Activated B cell treated with CpG ODN at 0.5 μM for 24 hours (primary cell): ENCODE measurements at regions of chr10 and their contacts with region 1.

Region 1: DNA sequence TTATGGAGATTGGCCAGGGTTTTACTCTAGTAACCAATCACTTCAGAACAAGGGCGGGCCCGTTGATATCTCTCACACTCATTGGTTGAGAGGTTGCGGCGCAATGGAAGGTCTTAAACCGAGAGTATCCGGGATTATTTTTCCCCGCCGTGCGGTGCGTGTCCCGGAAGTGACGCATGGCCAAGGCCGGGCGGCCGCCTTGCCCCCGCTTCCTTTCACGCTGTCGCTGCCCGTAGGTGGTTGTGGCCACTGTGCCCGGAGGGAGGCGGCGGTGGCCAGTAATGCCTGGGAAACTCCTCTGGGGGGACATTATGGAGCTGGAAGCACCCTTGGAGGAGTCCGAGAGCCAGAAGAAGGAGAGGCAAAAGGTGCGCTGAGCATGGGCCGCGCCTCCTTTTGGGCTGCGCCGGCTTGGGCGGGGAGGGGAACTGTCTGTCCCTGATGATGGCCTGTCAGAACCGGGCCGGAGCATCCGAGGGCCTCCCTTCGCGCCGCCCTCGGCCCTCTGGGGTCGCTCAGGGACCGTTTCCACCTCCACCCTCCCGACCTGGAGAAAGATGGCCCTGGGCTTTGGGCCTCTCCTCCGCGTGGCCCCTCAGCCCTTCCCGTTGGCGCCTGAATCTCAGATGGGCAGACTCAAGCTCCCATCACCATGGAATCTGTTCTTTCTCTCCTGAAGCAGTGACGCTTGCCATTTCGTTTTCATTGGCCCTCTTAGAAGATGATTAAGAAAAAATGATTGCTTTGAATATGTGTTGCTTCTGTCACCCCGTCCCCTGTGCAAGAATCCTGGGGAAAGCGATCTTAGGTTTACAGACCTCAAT is at the start of gene DDX50:
- DNase-seq: peak; percentile 92
- ATAC-seq: peak; percentile 96
- H3K4me3 Mint-ChIP-seq: peak within 1 kb of the TSS; percentile 98
- H3K27ac Mint-ChIP-seq: peak within 1 kb of the TSS; percentile 98
- H3K4me1 Mint-ChIP-seq: peaks cover 40% of the 10 kb centered on the region
- H3K27me3 Mint-ChIP-seq: no peaks in the 10 kb centered on the region
- CTCF ChIP-seq: no peak
- total RNA-seq, gene DDX50: 36.3 and 41.7 TPM in 2 replicates

Region 2: GRCh38 chr10:67936416-67936815 is 964.9 kb before region 1 on chr10:
- CTCF ChIA-PET with region 1: no interaction called
- POLR2A ChIA-PET with region 1: no interaction called
- intact Hi-C with region 1: no loop called
- DNase-seq: no peak
- ATAC-seq: no peak
- H3K4me3 Mint-ChIP-seq: no peak overlapping the region
- H3K27ac Mint-ChIP-seq: no peak overlapping the region
- H3K4me1 Mint-ChIP-seq: no peaks in the 10 kb centered on the region
- H3K27me3 Mint-ChIP-seq: no peaks in the 10 kb centered on the region
- CTCF ChIP-seq: no peak

Region 3: GRCh38 chr10:68074775-68075549 is 826.4 kb before region 1 on chr10 and contains the start of gene HERC4:
- CTCF ChIA-PET with region 1: no interaction called
- POLR2A ChIA-PET with region 1: no interaction called
- intact Hi-C with region 1: loop called (anchors 2 kb)
- DNase-seq: peak; percentile 91
- ATAC-seq: peak; percentile 92
- H3K4me3 Mint-ChIP-seq: peak within 1 kb of the TSS; percentile 97
- H3K27ac Mint-ChIP-seq: peak within 1 kb of the TSS; percentile 97
- H3K4me1 Mint-ChIP-seq: peaks cover 39% of the 10 kb centered on the region
- H3K27me3 Mint-ChIP-seq: no peaks in the 10 kb centered on the region
- CTCF ChIP-seq: no peak
- total RNA-seq, gene HERC4: 65.3 and 84.2 TPM in 2 replicates

Region 4: DNA sequence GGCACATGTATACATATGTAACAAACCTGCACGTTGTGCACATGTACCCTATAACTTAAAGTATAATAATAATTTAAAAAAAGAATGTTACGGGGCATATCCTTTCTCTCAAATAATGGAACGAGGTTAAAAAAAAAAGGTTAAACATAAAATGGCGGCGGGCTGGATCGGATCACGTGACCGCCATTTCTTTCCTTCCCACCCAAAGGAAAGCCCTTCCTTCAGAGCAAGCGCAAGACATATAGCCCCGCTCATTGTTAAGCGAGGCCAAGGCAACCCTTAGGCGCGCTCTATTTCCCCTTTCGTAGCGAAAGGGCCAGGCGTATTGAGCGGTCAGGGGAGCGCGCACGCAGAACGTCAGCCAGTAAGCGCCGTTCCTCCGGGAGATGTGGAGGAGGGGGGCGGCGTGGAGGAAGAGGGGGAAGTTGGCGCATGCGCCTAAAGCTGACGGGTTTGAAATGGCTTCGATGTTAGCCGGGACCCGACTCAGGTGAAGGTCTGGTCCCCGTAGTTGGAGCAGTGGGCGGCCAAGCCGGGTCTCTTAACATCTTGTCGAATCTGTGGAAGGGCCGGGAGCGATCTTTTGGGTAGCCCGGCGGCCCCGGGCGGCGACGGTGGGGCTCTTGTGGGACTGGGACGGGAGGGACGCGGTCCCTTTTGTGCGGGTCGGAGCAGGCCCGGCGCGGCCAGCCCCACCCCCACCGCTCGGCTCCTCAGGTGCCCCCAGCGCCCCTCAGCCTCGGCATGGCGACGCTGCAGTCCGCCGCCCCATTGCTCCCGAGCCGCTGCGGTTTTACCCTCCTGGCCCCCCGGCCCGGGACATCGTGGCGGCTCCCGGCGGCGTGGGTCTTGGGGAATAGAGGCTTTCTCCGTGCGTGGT is 180.3 kb before region 1 on chr10 and contains the start of gene CCAR1:
- CTCF ChIA-PET with region 1: no interaction called
- POLR2A ChIA-PET with region 1: interaction called, 4 read pairs
- intact Hi-C with region 1: loop called (anchors 1 kb)
- DNase-seq: peak; percentile 93
- ATAC-seq: peak; percentile 98
- H3K4me3 Mint-ChIP-seq: peak within 1 kb of the TSS; percentile 92
- H3K27ac Mint-ChIP-seq: peak within 1 kb of the TSS; percentile 98
- H3K4me1 Mint-ChIP-seq: peaks cover 14% of the 10 kb centered on the region
- H3K27me3 Mint-ChIP-seq: no peaks in the 10 kb centered on the region
- CTCF ChIP-seq: no peak
- total RNA-seq, gene CCAR1: 88.2 and 98.8 TPM in 2 replicates

Region 5: DNA sequence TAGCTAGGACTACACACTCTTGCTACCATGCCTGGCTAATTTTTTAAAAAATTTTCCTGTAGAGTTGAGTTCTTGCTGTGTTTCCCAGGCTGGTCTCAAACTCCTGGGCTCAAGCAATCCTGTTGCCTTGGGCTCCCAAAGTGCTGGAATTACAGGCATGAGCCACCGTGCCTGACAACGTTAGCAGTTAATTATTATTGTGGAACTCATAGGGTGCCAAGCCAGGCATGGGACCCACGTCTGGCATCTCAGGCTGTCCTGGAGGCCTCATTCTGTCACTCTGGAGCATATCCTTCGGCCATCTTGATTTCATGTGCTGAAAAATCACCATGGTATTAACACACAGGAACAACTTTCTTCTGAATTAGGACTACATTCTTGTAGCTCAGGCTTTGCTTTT is 52.5 kb before region 1 on chr10:
- CTCF ChIA-PET with region 1: no interaction called
- POLR2A ChIA-PET with region 1: no interaction called
- intact Hi-C with region 1: no loop called
- DNase-seq: no peak
- ATAC-seq: no peak
- H3K4me3 Mint-ChIP-seq: no peak overlapping the region
- H3K27ac Mint-ChIP-seq: no peak overlapping the region
- H3K4me1 Mint-ChIP-seq: no peaks in the 10 kb centered on the region
- H3K27me3 Mint-ChIP-seq: no peaks in the 10 kb centered on the region
- CTCF ChIP-seq: no peak

Region 6: DNA sequence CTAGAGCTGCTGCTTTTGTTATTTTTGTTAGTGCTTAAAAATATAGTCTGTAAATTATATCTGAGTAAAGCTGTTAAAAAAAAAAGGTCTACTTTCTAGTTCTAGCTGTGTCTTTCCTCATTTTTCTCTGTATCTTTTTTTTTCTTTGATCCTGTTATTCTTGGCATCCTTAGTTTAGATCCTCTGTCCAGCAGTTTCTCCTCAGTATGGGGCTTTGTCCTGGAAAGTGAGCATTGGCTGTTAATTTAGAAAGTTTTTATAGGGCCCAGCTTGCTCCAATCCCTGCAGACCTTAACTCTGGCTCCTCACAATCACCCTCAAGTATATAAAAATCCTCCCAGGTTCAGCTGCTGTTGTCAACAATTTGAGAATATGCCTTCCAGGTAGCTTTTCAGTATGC is 23.3 kb after region 1 on chr10:
- CTCF ChIA-PET with region 1: no interaction called
- POLR2A ChIA-PET with region 1: interaction called, 12 read pairs
- intact Hi-C with region 1: no loop called
- DNase-seq: no peak
- ATAC-seq: no peak
- H3K4me3 Mint-ChIP-seq: no peak overlapping the region
- H3K27ac Mint-ChIP-seq: no peak overlapping the region
- H3K4me1 Mint-ChIP-seq: peaks cover 3% of the 10 kb centered on the region
- H3K27me3 Mint-ChIP-seq: no peaks in the 10 kb centered on the region
- CTCF ChIP-seq: no peak

Region 7: DNA sequence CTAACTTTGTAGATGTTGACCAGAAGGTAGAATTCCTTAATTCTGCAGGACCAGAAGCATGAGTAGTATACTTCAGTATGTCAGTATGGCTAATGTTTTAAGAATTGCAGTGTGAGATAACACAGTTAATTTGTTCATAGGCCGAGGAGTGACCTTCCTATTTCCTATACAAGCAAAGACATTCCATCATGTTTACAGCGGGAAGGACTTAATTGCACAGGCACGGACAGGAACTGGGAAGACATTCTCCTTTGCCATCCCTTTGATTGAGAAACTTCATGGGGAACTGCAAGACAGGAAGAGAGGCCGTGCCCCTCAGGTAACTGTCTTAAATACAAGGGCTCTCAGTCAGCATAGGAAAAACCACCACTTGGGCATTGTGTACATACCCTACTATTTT is 61.8 kb after region 1 on chr10:
- CTCF ChIA-PET with region 1: no interaction called
- POLR2A ChIA-PET with region 1: no interaction called
- intact Hi-C with region 1: no loop called
- DNase-seq: no peak
- ATAC-seq: no peak
- H3K4me3 Mint-ChIP-seq: no peak overlapping the region
- H3K27ac Mint-ChIP-seq: no peak overlapping the region
- H3K4me1 Mint-ChIP-seq: peaks cover 28% of the 10 kb centered on the region
- H3K27me3 Mint-ChIP-seq: no peaks in the 10 kb centered on the region
- CTCF ChIP-seq: no peak

Region 8: DNA sequence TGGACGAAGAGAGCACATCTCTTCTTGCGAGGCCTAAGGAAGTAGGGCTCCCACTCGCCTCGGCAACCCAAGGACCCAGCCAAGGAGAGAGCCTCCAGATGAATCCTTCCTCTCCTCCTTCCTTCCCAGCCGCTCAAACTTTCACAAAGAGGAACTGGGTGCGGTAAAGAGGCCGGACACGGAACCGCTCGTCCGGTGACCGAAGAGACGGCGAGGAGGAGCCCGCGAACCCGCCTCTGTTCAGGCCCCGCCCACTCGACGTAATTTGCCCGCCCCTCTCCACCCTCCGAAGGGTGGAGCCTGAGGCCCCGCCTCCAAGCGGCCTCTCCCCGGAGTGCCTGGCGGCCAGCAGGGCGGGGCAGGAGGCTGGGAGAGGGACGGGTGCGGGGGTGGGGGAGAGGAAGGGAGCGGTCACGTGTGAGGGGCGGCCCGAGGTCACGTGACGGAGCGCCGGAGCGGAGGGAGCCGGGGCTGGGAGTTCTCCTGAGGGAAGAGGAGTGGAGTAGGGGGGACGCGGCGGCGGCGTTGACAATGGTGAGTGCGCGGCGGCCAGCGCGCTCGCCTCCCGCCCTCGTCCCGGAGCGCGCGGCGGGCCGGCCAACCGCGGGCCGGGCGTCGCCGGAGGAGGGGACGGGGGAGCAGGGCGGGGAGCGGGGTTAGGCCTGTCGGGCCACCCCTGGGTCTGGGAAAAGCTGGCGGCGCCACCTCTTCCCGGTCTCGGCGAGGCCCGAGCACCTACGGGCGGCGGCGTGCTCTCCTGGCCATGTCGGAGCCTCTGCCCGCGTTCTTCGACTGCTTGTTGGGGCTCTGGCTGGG is 222.6 kb after region 1 on chr10 and contains the start of gene VPS26A:
- CTCF ChIA-PET with region 1: no interaction called
- POLR2A ChIA-PET with region 1: interaction called, 4 read pairs
- intact Hi-C with region 1: loop called (anchors 1 kb)
- DNase-seq: peak; percentile 100
- ATAC-seq: peak; percentile 94
- H3K4me3 Mint-ChIP-seq: peak within 1 kb of the TSS; percentile 93
- H3K27ac Mint-ChIP-seq: peak within 1 kb of the TSS; percentile 98
- H3K4me1 Mint-ChIP-seq: peaks cover 25% of the 10 kb centered on the region
- H3K27me3 Mint-ChIP-seq: no peaks in the 10 kb centered on the region
- CTCF ChIP-seq: no peak
- total RNA-seq, gene VPS26A: 25.9 and 29.5 TPM in 2 replicates

Region 9: GRCh38 chr10:69855346-69856111 is 954.2 kb after region 1 on chr10:
- CTCF ChIA-PET with region 1: no interaction called
- POLR2A ChIA-PET with region 1: no interaction called
- intact Hi-C with region 1: no loop called
- DNase-seq: no peak
- ATAC-seq: no peak
- H3K4me3 Mint-ChIP-seq: no peak overlapping the region
- H3K27ac Mint-ChIP-seq: no peak overlapping the region
- H3K4me1 Mint-ChIP-seq: no peaks in the 10 kb centered on the region
- H3K27me3 Mint-ChIP-seq: no peaks in the 10 kb centered on the region
- CTCF ChIP-seq: no peak